ENCODE measurements at regions of chr3 and their contacts with region 1.

Region 1: DNA sequence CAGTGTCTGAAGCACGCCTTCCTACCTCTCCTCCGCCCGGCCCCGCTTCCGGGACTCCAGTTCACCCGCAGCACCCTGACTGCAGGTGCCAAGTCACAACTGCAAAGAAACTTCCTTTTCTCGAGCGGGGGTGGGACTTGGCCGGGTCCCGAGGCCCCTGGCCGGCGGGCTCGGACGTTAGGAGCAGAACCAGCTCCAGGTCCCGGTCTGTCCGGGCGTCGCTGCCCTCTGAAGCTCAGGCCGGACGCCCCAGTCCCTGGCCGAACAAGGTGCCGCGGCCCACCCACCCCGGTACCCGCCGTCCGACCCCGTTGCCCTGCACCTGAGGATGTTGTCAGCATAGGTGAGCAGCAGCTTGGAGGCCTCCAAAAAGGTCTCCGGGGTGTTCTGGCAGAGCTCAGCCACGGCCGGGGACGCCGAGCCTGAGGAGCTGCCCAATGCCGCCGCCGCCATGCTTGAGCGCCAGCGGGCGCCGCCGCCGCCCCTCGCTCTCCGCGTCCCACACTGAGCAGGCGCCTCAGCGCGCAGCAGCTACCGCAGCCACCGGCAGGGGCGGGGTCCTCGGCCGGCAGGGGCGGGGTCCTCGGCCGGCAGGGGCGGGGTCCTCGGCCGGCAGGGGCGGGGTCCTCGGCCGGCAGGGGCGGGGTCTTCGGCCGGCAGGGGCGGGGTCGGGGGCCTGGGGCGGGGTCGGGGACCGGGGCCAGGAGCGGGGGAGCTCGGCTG is at the start of gene NGLY1:
- DNase-seq: peak; percentile 96
- H3K4me3 Mint-ChIP-seq: peak within 1 kb of the TSS; percentile 90
- H3K27ac Mint-ChIP-seq: peak within 1 kb of the TSS; percentile 89
- H3K4me1 Mint-ChIP-seq: peaks cover 48% of the 10 kb centered on the region
- H3K27me3 Mint-ChIP-seq: no peaks in the 10 kb centered on the region
- total RNA-seq, gene NGLY1: 65.0 and 70.7 TPM in 2 replicates

Region 2: GRCh38 chr3:25856902-25857518 is 73.9 kb after region 1 on chr3:
- intact Hi-C with region 1: loop called (anchors 5 kb)
- DNase-seq: peak; percentile 73
- H3K4me3 Mint-ChIP-seq: no peak overlapping the region
- H3K27ac Mint-ChIP-seq: no peak overlapping the region
- H3K4me1 Mint-ChIP-seq: peaks cover 2% of the 10 kb centered on the region
- H3K27me3 Mint-ChIP-seq: no peaks in the 10 kb centered on the region

Region 3: DNA sequence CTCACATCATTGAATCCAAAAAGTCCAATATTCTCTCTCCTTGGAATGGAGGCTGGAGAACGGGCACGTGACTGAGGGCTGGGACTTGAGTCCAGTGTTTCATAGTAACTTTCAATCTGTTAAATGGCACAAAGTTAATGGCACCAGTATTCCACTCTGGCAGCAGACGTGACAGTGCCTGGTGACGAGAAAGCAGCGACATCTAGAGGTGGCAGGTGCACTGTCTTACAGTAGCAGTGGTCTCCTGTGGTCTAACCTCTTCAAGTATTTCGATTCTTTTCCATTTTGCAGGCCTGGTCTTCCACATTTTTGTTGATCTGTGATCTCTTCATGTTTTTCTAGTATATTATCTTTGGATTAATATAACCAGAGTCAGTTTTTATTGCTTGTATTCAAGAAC is 113.9 kb after region 1 on chr3:
- intact Hi-C with region 1: no loop called
- DNase-seq: no peak
- H3K4me3 Mint-ChIP-seq: no peak overlapping the region
- H3K27ac Mint-ChIP-seq: no peak overlapping the region
- H3K4me1 Mint-ChIP-seq: peaks cover 3% of the 10 kb centered on the region
- H3K27me3 Mint-ChIP-seq: no peaks in the 10 kb centered on the region

Measured in activated CD4-positive, alpha-beta T cell treated with anti-CD3 and anti-CD28 coated beads, Interleukin-2, amount 10 ng/mL, durations not matched to agents 24 days and 14 days (primary cell).